ENCODE measurements at regions of chr16 and their contacts with region 1.

Region 1: GRCh38 chr16:75555707-75556430 is at the start of gene TMEM231:
- DNase-seq: peak; percentile 99
- ATAC-seq: peak; percentile 98
- H3K4me3 Mint-ChIP-seq: peak within 1 kb of the TSS; percentile 79
- H3K27ac Mint-ChIP-seq: peak within 1 kb of the TSS; percentile 71
- H3K4me1 Mint-ChIP-seq: peaks cover 7% of the 10 kb centered on the region
- H3K27me3 Mint-ChIP-seq: peaks cover 3% of the 10 kb centered on the region
- total RNA-seq, gene TMEM231: 3.6 to 4.1 TPM

Region 2: GRCh38 chr16:75219838-75220237 is 336.0 kb before region 1 on chr16:
- CTCF ChIA-PET with region 1: no interaction called
- POLR2A ChIA-PET with region 1: no interaction called
- intact Hi-C with region 1: no loop called
- DNase-seq: peak; percentile 58
- ATAC-seq: peak; percentile 91
- H3K4me3 Mint-ChIP-seq: peak overlapping the region; percentile 67
- H3K27ac Mint-ChIP-seq: peak overlapping the region; percentile 83
- H3K4me1 Mint-ChIP-seq: peaks cover 21% of the 10 kb centered on the region
- H3K27me3 Mint-ChIP-seq: no peaks in the 10 kb centered on the region

Region 3: DNA sequence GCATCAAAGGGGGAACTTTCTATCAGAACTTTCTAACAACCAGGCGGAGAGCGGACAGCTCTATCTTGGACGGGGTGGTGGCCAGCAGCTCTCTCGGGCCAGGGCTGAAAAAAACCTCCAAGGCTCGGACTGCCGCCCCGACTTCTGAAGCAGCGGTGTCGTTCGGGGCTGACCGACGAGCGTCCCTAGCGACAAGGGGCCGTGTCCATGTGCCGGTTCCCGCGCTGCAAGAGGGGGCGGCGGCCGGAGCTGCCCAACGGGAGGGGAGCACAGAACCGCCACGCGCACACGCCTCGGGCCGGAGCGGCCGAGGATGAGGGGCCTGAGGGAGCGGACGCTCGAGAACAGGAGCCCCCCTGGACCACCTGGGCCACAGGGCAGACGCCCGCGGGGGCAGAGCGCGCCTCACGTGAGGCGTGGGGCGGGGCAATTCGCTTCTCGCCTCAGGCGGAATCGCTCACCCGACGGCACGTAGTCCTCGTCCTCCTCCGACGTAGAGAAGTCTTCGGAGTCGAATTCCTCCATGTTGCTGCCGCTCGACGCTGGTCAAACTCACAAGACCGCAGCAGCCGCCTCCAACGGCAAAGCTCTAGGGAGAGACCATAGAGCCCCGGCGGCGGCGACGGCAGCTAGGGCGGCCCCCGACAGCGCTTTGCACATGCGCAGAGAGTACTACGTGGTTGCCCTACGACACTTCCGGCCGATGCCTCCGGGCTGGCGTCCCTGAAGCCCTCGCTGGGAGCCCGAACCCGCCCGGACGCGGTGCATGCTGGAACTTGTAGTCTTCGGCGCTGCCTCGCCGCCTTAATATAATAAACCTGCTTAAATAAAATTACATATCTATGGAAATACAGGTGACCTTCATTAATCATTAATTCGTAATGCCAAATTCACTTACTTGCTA is 122.8 kb before region 1 on chr16 and contains the start of gene CFDP1:
- CTCF ChIA-PET with region 1: interaction called, 3 read pairs
- POLR2A ChIA-PET with region 1: interaction called, 3 read pairs
- intact Hi-C with region 1: loop called in 1 of 2 experiments (anchors 2 kb)
- DNase-seq: peak; percentile 97
- ATAC-seq: peak; percentile 94
- H3K4me3 Mint-ChIP-seq: peak within 1 kb of the TSS; percentile 92
- H3K27ac Mint-ChIP-seq: peak within 1 kb of the TSS; percentile 95
- H3K4me1 Mint-ChIP-seq: peaks cover 39% of the 10 kb centered on the region
- H3K27me3 Mint-ChIP-seq: no peaks in the 10 kb centered on the region
- total RNA-seq, gene CFDP1: 44.0 to 48.2 TPM

Region 4: GRCh38 chr16:75464130-75464918 is 91.5 kb before region 1 on chr16 and contains the start of gene TMEM170A:
- CTCF ChIA-PET with region 1: interaction called, 6 read pairs
- POLR2A ChIA-PET with region 1: no interaction called
- intact Hi-C with region 1: loop called (anchors 1 to 2 kb)
- DNase-seq: peak; percentile 100
- ATAC-seq: peak; percentile 94
- H3K4me3 Mint-ChIP-seq: peak within 1 kb of the TSS; percentile 98
- H3K27ac Mint-ChIP-seq: peak within 1 kb of the TSS; percentile 94
- H3K4me1 Mint-ChIP-seq: peaks cover 45% of the 10 kb centered on the region
- H3K27me3 Mint-ChIP-seq: no peaks in the 10 kb centered on the region
- total RNA-seq, gene TMEM170A: 22.0 to 30.5 TPM

Region 5: DNA sequence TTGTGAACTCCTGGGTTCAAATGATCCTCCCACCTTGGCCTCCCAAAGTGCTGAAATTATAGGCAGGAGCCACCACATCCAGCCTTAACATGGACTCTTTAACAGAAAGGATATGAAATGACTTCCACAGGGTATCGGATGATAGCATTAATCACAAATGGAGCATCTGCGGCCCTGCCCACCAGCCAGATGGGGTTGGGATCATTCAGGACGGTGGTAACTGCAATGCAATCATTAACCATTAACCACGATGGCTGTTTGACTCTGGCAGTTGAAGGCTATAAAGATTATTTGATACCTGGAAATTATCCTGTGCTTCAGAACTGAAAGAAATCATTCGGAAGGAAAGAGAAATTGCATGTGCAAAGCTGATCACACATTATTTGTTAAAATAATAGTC is 14.6 kb before region 1 on chr16:
- CTCF ChIA-PET with region 1: no interaction called
- POLR2A ChIA-PET with region 1: no interaction called
- intact Hi-C with region 1: no loop called
- DNase-seq: no peak
- ATAC-seq: no peak
- H3K4me3 Mint-ChIP-seq: no peak overlapping the region
- H3K27ac Mint-ChIP-seq: no peak overlapping the region
- H3K4me1 Mint-ChIP-seq: no peaks in the 10 kb centered on the region
- H3K27me3 Mint-ChIP-seq: no peaks in the 10 kb centered on the region

Region 6: DNA sequence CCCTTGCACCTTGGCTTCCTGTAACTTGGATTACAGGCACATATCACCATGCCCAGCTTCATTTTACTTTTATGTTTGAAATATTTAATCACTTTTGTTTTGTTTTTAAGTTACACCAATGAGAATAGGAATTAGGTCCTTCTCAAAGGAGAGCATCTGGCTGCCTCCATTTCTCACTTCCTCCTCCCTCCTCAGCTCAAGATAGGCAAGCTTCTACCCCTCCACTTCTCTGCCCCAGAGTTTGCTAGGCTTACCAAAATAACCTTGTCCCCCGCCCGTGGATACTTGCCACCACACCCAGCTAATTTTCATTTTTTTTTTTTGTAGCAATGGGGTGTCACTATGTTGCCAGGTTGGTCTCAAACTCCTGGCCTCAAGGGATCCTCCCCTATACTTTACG is 28.2 kb after region 1 on chr16:
- CTCF ChIA-PET with region 1: interaction called, 5 read pairs
- POLR2A ChIA-PET with region 1: no interaction called
- intact Hi-C with region 1: loop called in 1 of 2 experiments (anchors 1 kb)
- DNase-seq: no peak
- ATAC-seq: no peak
- H3K4me3 Mint-ChIP-seq: no peak overlapping the region
- H3K27ac Mint-ChIP-seq: no peak overlapping the region
- H3K4me1 Mint-ChIP-seq: peaks cover 7% of the 10 kb centered on the region
- H3K27me3 Mint-ChIP-seq: no peaks in the 10 kb centered on the region

Region 7: DNA sequence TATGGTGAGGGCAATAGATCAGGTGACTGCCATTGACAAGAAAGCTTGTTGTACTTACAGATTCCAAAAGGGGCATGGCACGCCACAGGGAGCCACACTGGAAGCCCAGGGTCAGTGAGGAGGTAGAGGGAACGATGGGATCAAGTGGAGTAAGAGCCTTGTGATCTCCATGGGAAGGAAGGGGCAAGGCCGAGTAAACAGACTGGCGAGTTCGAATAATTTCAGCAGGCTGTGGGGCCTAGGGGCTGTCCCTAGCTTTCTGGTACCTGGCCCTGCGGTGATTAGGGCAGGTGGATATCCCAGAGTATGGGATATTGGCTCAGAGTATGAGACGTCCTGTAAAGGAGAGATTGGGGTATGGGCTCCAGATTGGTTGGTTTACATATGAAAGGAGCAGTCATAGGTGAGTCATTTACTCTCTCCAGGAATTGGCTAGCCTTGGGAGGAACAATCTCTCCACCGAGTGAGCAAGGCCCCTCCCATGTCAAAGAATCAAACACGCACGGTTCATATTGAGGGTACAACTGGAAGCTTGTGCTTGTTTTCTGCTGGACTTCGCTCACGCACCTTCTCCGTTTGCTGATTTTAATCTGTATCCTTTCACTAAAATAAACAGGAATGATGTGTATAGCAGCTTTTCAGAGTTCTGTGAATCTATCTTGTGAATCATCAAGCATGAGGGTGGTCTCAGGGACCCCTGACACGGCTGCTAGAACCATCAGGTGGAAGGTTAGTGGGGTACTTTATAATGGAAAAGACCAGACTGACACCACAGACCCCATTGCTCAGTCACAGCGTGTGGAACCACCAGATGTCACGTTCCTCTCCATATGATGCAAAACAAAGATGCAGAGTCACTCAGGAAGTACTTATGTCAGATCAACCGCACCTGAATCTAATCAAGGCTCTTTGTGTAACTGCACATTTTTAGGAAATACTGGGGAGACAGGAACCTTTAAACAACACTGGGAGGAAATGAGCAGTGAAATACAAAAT is 38.3 kb after region 1 on chr16:
- CTCF ChIA-PET with region 1: no interaction called
- POLR2A ChIA-PET with region 1: no interaction called
- intact Hi-C with region 1: no loop called
- DNase-seq: peak; percentile 42
- ATAC-seq: peak; percentile 83
- H3K4me3 Mint-ChIP-seq: no peak overlapping the region
- H3K27ac Mint-ChIP-seq: peak overlapping the region; percentile 71
- H3K4me1 Mint-ChIP-seq: peaks cover 14% of the 10 kb centered on the region
- H3K27me3 Mint-ChIP-seq: no peaks in the 10 kb centered on the region

Region 8: GRCh38 chr16:75789237-75789636 is 233.4 kb after region 1 on chr16:
- CTCF ChIA-PET with region 1: no interaction called
- POLR2A ChIA-PET with region 1: no interaction called
- intact Hi-C with region 1: no loop called
- DNase-seq: no peak
- ATAC-seq: peak; percentile 42
- H3K4me3 Mint-ChIP-seq: no peak overlapping the region
- H3K27ac Mint-ChIP-seq: no peak overlapping the region
- H3K4me1 Mint-ChIP-seq: no peaks in the 10 kb centered on the region
- H3K27me3 Mint-ChIP-seq: peaks cover 5% of the 10 kb centered on the region